ENCODE measurements at regions of chr18 and their contacts with region 1.

Region 1: DNA sequence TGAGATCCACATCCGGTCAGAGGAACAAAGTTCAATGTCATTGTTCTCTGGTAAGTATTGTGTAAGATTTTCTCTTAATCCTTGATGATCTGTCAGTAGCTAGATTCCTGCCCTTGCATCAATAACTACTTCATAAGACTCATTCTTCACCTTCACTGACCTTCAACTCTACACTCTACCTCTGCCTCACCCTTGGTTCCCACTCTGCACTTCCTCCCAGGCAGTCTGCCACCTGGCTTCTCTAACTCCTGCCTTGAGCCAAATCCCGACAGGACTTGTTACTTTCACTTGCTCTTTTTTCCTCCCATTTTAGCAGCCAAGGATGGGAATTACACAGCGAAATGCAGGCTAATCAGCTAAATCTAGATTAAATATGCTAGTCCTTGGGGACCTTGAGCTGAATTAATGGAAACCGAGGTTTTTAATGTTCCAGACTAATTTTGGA is 190.7 kb downstream of the DLGAP1 start:
- DNase-seq: no peak
- CTCF ChIP-seq: no peak

Region 2: GRCh38 chr18:4251873-4252272 is 12.5 kb before region 1 on chr18:
- CTCF ChIA-PET with region 1: interaction called, 11 read pairs
- POLR2A ChIA-PET with region 1: no interaction called
- DNase-seq: no peak
- CTCF ChIP-seq: no peak

Measured in GM10248 (cell line).